ENCODE measurements at regions of chr6 and their contacts with region 1.

Region 1: DNA sequence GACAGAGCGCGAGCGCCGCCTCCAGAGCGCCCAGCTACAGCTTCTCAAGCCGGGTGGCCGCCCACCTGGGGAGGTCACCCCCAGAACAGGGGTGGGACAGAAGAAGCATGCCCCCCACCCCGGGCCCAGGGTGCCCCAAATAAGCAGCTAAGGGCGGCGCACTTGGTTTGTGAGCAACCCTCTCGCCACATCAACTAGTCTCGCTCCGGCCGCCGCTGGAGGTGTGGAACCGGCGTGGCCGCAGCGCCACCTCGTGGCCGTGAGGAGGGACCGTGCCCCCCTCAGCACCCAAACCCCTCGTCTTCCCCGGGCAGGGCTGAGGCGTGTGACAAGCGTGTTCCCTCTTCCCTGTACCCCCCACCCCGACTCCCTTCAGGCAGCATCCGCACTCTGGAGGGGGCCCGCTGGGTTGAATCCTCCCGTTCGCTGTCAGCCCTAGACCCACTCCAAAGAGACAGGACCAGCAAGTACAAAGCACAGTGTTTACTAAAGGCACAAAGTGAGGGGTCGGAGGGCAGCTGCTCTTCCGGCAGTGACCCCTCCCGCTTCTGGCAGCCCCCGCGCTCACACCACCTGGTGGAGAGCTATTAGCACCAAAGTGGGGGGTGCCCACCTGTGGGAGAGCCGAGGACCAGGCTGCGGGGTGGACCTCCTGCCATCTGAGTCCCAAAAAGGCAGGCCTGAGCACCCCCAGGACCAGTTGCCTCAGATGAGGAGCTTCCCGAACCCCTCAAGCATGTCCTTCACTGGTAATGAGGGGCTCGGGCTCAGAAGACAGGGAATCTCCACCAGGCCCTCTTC is 45.4 kb downstream of the MDFI start:
- DNase-seq: peak; percentile 53 to 65
- ATAC-seq: peak; percentile 84 to 90
- H3K4me3 ChIP-seq: no peak overlapping the region
- H3K27ac ChIP-seq: peak overlapping the region in 1 of 2 experiments; percentile 56; a peak in 2 of 6 replicates
- H3K4me1 ChIP-seq: 0 out of 3 replicates have a peak, but pooled peaks cover 3% of the 10 kb centered on the region
- CTCF ChIP-seq: peak; percentile 74
- EP300 ChIP-seq: no peak
- POLR2A ChIP-seq: no peak
- RAD21 ChIP-seq: peak; percentile 75 to 83

Region 2: GRCh38 chr6:41424370-41425058 is 259.2 kb before region 1 on chr6:
- CTCF ChIA-PET with region 1: interaction called, 12 read pairs
- POLR2A ChIA-PET with region 1: no interaction called
- DNase-seq: peak; percentile 64
- ATAC-seq: peak; percentile 75 to 89; a peak in 5 of 6 replicates
- H3K4me3 ChIP-seq: no peak overlapping the region
- H3K27ac ChIP-seq: peak overlapping the region in 1 of 2 experiments; percentile 59; a peak in 2 of 6 replicates
- H3K4me1 ChIP-seq: 0 out of 3 replicates have a peak, but pooled peaks cover 4% of the 10 kb centered on the region
- CTCF ChIP-seq: peak; percentile 63
- EP300 ChIP-seq: no peak
- POLR2A ChIP-seq: no peak
- RAD21 ChIP-seq: peak; percentile 59 to 63; a peak in 4 of 5 replicates

Region 3: GRCh38 chr6:41663563-41663962 is 20.1 kb before region 1 on chr6:
- CTCF ChIA-PET with region 1: interaction called, 19 read pairs
- POLR2A ChIA-PET with region 1: no interaction called
- DNase-seq: no peak
- ATAC-seq: no peak
- H3K4me3 ChIP-seq: no peak overlapping the region
- H3K27ac ChIP-seq: no peak overlapping the region
- H3K4me1 ChIP-seq: no peaks in the 10 kb centered on the region
- CTCF ChIP-seq: no peak
- EP300 ChIP-seq: no peak
- POLR2A ChIP-seq: no peak
- RAD21 ChIP-seq: no peak

Region 4: DNA sequence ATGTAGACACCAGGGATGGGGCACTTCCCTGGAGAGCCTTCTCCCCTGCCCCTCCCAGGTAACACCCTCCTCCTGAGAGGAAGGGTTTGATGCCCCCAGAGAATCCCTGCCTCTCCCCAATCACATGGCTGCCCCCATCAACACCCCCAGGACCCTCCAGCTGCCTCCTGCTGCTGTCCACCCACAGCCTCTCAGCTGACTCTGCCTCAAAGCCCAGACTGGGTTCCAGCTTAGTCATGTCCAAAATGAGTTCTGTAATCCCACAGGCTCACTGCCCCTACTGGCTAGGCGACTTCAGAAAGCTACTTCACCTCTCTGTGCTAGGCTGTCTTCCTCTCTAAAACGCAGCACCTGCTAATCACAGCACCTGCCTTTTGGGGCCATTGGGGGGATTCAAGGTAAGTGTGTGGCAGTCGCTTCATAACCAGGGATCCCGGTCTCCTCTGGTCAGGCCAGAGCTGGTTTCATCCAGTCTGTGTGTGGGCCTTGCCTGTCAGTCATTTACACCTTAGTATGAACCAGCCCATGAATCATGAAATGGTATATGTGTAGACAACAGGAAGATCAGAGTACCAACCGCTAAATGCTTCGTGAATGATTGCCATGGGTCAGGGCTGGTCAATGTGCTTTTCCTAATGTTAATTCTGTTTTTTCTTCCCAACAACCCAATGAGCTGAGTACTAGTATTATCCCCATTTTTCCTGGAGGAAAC is 11.3 kb after region 1 on chr6:
- CTCF ChIA-PET with region 1: interaction called, 31 read pairs
- POLR2A ChIA-PET with region 1: no interaction called
- DNase-seq: no peak
- ATAC-seq: peak; percentile 33 to 46; a peak in 2 of 6 replicates
- H3K4me3 ChIP-seq: no peak overlapping the region
- H3K27ac ChIP-seq: no peak overlapping the region
- H3K4me1 ChIP-seq: no peaks in the 10 kb centered on the region
- CTCF ChIP-seq: no peak
- EP300 ChIP-seq: no peak
- POLR2A ChIP-seq: no peak
- RAD21 ChIP-seq: no peak

Region 5: DNA sequence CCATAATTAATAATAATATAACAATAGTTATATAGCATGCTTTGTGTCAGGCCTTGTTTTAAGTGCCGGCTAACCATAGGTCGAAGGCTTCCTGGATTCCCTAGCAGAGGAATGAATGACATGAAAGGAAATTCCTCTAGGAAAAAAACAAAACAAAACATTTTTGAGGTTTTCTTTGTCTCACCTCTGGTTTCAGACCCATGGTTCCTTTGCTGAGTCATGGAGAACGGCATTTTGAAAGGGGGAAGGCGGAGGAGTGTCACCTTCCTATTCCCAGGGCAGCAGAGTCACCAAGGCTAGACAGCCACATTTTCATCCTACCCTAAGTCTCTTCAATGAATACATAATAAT is 283.2 kb after region 1 on chr6:
- CTCF ChIA-PET with region 1: no interaction called
- POLR2A ChIA-PET with region 1: no interaction called
- DNase-seq: peak; percentile 50 to 84
- ATAC-seq: peak; percentile 65 to 70
- H3K4me3 ChIP-seq: peak overlapping the region; percentile 31; the same call in 2 of the 3 replicates
- H3K27ac ChIP-seq: peak overlapping the region; percentile 95 to 97
- H3K4me1 ChIP-seq: peaks cover 80% of the 10 kb centered on the region
- CTCF ChIP-seq: no peak
- EP300 ChIP-seq: no peak
- POLR2A ChIP-seq: no peak
- RAD21 ChIP-seq: no peak